Sigmoid colon (tissue), 7 donors: ENCODE measurements at regions of chr1 and their contacts with region 1.

Region 1: DNA sequence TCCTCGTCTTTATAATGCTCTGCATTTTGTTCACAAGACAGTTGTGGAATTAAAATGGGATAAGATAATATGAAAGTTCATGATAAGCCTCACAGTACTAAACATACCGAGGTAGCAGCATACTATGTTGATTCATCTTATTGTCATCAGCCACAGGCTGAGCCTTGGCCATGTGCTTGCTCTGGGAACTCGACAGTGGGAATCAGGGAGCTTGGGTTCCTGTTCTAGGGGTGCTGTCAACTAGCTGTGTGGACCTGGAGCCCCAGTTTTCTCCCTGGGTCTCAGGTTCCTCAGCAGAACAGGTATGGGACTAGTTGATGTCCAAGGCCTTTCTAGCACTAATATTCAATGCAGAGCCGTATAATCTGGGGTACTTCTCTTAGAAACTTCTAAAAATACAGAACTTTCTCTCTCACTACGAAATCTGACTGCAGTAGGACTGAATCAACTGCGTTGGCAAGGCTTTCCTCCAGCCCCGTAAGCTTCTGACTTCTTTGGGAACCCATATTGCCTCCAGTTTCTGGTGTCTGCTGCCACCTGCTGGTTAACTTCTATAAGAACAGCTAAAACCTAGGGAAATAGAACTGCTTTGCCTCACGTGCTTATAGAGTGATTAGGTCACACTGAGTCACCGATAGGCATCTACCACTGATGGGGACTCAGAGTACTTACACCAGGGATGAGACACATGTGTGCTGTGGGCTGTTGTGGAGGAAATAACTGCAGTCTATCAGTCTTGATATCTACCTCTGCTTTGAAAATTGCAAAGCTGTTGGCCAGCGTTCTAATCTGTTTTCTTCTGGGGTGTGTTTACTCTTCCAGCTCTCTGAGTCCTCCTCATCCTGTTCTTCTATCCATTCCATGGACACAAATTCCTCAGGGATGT is 110.9 kb downstream of the RGL1 start:
- DNase-seq: peak; percentile 92
- H3K4me3 ChIP-seq: no peak overlapping the region
- H3K27ac ChIP-seq: peak overlapping the region; percentile 58 to 74 (median 70)
- H3K4me1 ChIP-seq: peaks cover 0 to 33% (median 29%) of the 10 kb centered on the region in 4 donors
- H3K27me3 ChIP-seq: no peaks in the 10 kb centered on the region
- CTCF ChIP-seq: peak; percentile 82 to 86 (median 84)
- EP300 ChIP-seq: no peak
- POLR2A ChIP-seq: no peak

Region 2: DNA sequence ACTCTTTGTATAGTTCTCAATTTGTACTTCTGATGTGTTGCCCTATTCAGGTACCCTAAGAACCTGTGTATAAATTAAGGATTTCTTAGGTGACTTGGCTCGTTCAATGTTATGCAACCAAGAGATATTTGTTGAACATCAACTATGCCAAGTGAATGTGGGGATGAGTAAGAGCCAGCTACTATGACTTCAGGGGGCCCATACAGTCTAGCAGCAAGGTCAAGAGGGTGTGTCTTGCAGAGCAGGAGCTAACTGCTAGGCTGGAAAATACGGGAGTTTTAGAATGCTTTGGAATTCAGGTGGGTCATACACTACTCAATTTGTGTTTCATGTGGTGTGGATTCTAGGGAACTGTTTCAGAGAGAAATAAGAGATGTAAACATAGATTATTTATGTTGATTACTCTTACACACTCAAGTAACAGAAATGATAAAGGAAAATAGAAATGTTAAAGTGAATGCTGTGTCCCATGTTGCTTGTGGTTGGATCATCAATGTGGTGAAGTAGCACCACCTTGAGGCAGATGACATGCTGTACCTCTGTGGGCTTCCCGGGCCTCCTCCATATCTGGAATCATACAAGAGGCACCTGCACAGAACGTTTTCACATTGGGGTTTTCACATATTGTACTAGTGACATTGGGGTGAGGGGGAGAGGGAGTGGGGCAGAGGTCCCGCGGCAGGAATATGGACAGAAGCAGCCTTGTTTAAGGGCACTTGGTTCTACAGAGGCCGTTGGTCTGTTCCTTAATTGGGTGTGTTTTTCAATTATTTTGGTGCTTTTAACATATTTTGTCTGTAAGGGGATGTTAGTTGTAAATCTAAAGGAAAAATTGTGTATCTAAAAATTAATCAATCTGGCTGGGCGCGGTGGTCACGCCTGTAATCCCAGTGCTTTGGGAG is 292.7 kb before region 1 on chr1:
- intact Hi-C with region 1: no loop called
- DNase-seq: no peak
- H3K4me3 ChIP-seq: no peak overlapping the region
- H3K27ac ChIP-seq: peak overlapping the region; percentile 43 to 54 (median 50)
- H3K4me1 ChIP-seq: peaks cover 0 to 50% (median 36%) of the 10 kb centered on the region in 4 donors
- H3K27me3 ChIP-seq: no peaks in the 10 kb centered on the region
- CTCF ChIP-seq: peak in 3 of 4 experiments; percentile 34 to 59 (median 51)
- EP300 ChIP-seq: no peak
- POLR2A ChIP-seq: no peak

Region 3: DNA sequence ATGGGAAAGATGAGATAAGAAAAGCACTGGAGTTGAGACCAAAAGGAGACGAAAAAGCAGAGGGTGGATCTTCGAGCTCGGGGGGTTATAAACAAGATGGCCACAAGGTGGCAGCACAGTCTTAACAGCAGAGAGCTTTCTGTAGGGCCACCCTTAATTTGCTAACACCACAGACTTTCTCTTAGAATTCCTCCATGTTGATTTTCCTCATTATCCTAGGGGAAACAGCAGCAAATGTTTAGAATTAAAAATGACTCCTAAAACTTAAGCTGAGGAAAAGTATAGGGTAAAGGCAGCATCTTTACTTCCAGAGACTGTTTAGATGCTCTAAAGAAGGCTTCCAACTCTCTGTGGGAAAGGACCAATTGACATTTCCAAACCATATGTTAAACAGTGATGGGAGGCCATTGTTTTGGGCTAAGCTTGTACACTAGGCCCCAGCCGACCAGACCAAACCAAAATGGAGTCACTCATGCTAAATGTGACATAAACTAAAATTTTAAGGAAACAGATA is 260.2 kb before region 1 on chr1:
- intact Hi-C with region 1: loop called (anchors 1 kb)
- DNase-seq: peak; percentile 91
- H3K4me3 ChIP-seq: no peak overlapping the region
- H3K27ac ChIP-seq: no peak overlapping the region
- H3K4me1 ChIP-seq: peaks cover 0 to 26% (median 12%) of the 10 kb centered on the region in 4 donors
- H3K27me3 ChIP-seq: no peaks in the 10 kb centered on the region
- CTCF ChIP-seq: peak; percentile 76 to 90 (median 84)
- EP300 ChIP-seq: no peak
- POLR2A ChIP-seq: no peak

Region 4: GRCh38 chr1:183711741-183712361 is 204.0 kb before region 1 on chr1:
- intact Hi-C with region 1: no loop called
- DNase-seq: no peak
- H3K4me3 ChIP-seq: no peak overlapping the region
- H3K27ac ChIP-seq: no peak overlapping the region
- H3K4me1 ChIP-seq: peaks cover 0 to 18% (median 12%) of the 10 kb centered on the region in 4 donors
- H3K27me3 ChIP-seq: no peaks in the 10 kb centered on the region
- CTCF ChIP-seq: no peak
- EP300 ChIP-seq: no peak
- POLR2A ChIP-seq: no peak

Region 5: DNA sequence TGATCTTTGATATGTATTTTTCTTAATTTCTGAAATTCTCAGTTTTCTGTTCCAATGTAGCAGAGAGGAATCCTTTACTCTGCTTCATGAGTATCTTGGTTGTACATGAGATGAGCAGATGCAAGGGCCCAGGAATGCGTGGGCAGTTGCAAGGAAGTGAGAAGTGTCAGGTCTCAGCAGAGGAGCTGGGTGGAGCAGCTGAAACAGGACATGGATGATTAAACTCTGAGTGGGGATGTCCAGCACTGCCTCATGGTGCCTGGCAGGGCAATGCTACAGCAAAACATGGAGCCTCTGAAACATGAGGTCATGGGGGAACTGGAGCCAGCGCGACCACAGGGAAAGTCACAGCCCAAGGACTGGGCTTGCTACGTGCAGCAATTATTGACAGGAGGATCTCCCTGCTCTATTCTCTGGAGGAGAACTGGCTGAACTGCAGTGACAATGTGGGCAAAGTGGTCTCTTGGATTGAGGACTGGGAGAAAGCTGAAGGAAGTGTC is 73.3 kb after region 1 on chr1:
- intact Hi-C with region 1: no loop called
- DNase-seq: no peak
- H3K4me3 ChIP-seq: no peak overlapping the region
- H3K27ac ChIP-seq: peak overlapping the region in 1 of 4 donors; percentile 12
- H3K4me1 ChIP-seq: no peaks in the 10 kb centered on the region
- H3K27me3 ChIP-seq: no peaks in the 10 kb centered on the region
- CTCF ChIP-seq: no peak
- EP300 ChIP-seq: no peak
- POLR2A ChIP-seq: no peak